CD4-positive, alpha-beta T cell (primary cell): ENCODE measurements at regions of chr7 and their contacts with region 1.

Region 1: GRCh38 chr7:87219545-87220025 is at the start of gene TMEM243:
- DNase-seq: peak; percentile 71 to 93 (median 82)
- ATAC-seq: peak; percentile 65
- H3K4me3 ChIP-seq: peak within 1 kb of the TSS; percentile 89
- H3K4me3 Mint-ChIP-seq: peak within 1 kb of the TSS; percentile 100
- H3K27ac ChIP-seq: peak within 1 kb of the TSS; percentile 83 to 97
- H3K27ac Mint-ChIP-seq: peak within 1 kb of the TSS; percentile 92
- H3K4me1 ChIP-seq: peaks cover 41% of the 10 kb centered on the region
- H3K4me1 Mint-ChIP-seq: peaks cover 47% of the 10 kb centered on the region
- H3K27me3 ChIP-seq: no peaks in the 10 kb centered on the region
- H3K27me3 Mint-ChIP-seq: no peaks in the 10 kb centered on the region
- CTCF ChIP-seq: peak; percentile 31
- total RNA-seq, gene TMEM243: 158 to 161 TPM

Region 2: GRCh38 chr7:86978808-86979506 is 240.6 kb before region 1 on chr7:
- CTCF ChIA-PET with region 1: no interaction called
- POLR2A ChIA-PET with region 1: interaction called, 4 read pairs
- intact Hi-C with region 1: loop called in 1 of 2 experiments (anchors 5 kb)
- DNase-seq: peak in 6 of 14 experiments; percentile 5 to 90 (median 58)
- ATAC-seq: peak; percentile 90
- H3K4me3 ChIP-seq: no peak overlapping the region
- H3K4me3 Mint-ChIP-seq: peak overlapping the region; percentile 5
- H3K27ac ChIP-seq: peak overlapping the region; percentile 36 to 47
- H3K27ac Mint-ChIP-seq: peak overlapping the region; percentile 86
- H3K4me1 ChIP-seq: peaks cover 21% of the 10 kb centered on the region
- H3K4me1 Mint-ChIP-seq: peaks cover 54% of the 10 kb centered on the region
- H3K27me3 ChIP-seq: no peaks in the 10 kb centered on the region
- H3K27me3 Mint-ChIP-seq: no peaks in the 10 kb centered on the region
- CTCF ChIP-seq: no peak

Region 3: DNA sequence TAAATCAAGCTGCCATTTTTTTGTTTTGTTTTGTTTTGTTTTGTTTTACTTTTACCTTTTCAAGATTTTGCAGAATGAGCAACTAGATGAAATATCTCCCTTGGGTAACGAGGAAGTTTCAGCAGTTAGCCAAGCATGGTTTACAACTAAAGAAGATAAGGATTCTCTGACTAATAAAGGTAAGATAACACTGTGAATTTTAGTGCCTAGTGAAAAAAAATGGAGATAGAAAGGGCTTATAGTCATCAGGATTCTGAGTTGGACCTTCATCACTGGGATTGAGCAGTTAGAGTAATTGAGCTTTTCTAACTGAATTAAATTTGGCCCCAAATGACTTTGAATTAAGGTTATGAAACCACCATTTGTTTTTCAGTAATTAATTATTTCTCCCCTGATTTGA is 46.1 kb before region 1 on chr7:
- CTCF ChIA-PET with region 1: interaction called, 8 read pairs
- POLR2A ChIA-PET with region 1: interaction called, 21 read pairs
- intact Hi-C with region 1: no loop called
- DNase-seq: no peak
- ATAC-seq: no peak
- H3K4me3 ChIP-seq: no peak overlapping the region
- H3K4me3 Mint-ChIP-seq: no peak overlapping the region
- H3K27ac ChIP-seq: no peak overlapping the region
- H3K27ac Mint-ChIP-seq: peak overlapping the region; percentile 54
- H3K4me1 ChIP-seq: no peaks in the 10 kb centered on the region
- H3K4me1 Mint-ChIP-seq: peaks cover 50% of the 10 kb centered on the region
- H3K27me3 ChIP-seq: no peaks in the 10 kb centered on the region
- H3K27me3 Mint-ChIP-seq: no peaks in the 10 kb centered on the region
- CTCF ChIP-seq: no peak

Region 4: GRCh38 chr7:87199700-87200450 is 19.7 kb before region 1 on chr7:
- CTCF ChIA-PET with region 1: interaction called, 5 read pairs
- POLR2A ChIA-PET with region 1: interaction called, 80 read pairs
- intact Hi-C with region 1: no loop called
- DNase-seq: no peak
- ATAC-seq: no peak
- H3K4me3 ChIP-seq: no peak overlapping the region
- H3K4me3 Mint-ChIP-seq: peak overlapping the region; percentile 9
- H3K27ac ChIP-seq: no peak overlapping the region
- H3K27ac Mint-ChIP-seq: peak overlapping the region; percentile 68
- H3K4me1 ChIP-seq: peaks cover 18% of the 10 kb centered on the region
- H3K4me1 Mint-ChIP-seq: peaks cover 74% of the 10 kb centered on the region
- H3K27me3 ChIP-seq: no peaks in the 10 kb centered on the region
- H3K27me3 Mint-ChIP-seq: no peaks in the 10 kb centered on the region
- CTCF ChIP-seq: no peak

Region 5: DNA sequence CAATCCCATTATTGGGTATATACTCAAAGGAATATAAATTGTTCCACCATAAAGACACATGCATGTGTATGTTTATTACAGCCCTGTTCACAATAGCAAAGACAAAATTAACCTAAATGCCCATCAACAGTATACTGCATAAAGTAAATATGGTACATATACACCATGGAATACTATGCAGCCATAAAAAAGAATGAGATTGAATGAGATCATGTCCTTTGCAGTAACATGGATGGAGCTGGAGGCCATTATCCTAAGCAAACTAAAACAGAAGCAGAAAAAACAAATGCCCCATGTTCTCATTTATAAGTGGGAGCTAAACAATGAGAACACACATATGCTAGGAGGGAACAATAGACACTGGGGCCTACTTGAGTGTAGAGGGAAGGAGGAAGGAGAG is 81.2 kb after region 1 on chr7:
- CTCF ChIA-PET with region 1: no interaction called
- POLR2A ChIA-PET with region 1: no interaction called
- intact Hi-C with region 1: no loop called
- DNase-seq: no peak
- ATAC-seq: no peak
- H3K4me3 ChIP-seq: no peak overlapping the region
- H3K4me3 Mint-ChIP-seq: no peak overlapping the region
- H3K27ac ChIP-seq: no peak overlapping the region
- H3K27ac Mint-ChIP-seq: no peak overlapping the region
- H3K4me1 ChIP-seq: no peaks in the 10 kb centered on the region
- H3K4me1 Mint-ChIP-seq: no peaks in the 10 kb centered on the region
- H3K27me3 ChIP-seq: no peaks in the 10 kb centered on the region
- H3K27me3 Mint-ChIP-seq: peaks cover 5% of the 10 kb centered on the region
- CTCF ChIP-seq: no peak

Region 6: GRCh38 chr7:87426160-87426559 is 206.6 kb after region 1 on chr7:
- CTCF ChIA-PET with region 1: no interaction called
- POLR2A ChIA-PET with region 1: no interaction called
- intact Hi-C with region 1: no loop called
- DNase-seq: no peak
- ATAC-seq: no peak
- H3K4me3 ChIP-seq: no peak overlapping the region
- H3K4me3 Mint-ChIP-seq: no peak overlapping the region
- H3K27ac ChIP-seq: no peak overlapping the region
- H3K27ac Mint-ChIP-seq: no peak overlapping the region
- H3K4me1 ChIP-seq: no peaks in the 10 kb centered on the region
- H3K4me1 Mint-ChIP-seq: no peaks in the 10 kb centered on the region
- H3K27me3 ChIP-seq: peaks cover 3 to 15% of the 10 kb centered on the region in 2 experiments
- H3K27me3 Mint-ChIP-seq: peaks cover 25% of the 10 kb centered on the region
- CTCF ChIP-seq: no peak

Region 7: GRCh38 chr7:87876040-87876868 is 656.7 kb after region 1 on chr7 and contains the starts of genes DBF4 and SLC25A40:
- CTCF ChIA-PET with region 1: no interaction called
- POLR2A ChIA-PET with region 1: interaction called, 5 read pairs
- intact Hi-C with region 1: loop called (anchors 5 to 10 kb)
- DNase-seq: peak; percentile 88 to 98 (median 95)
- ATAC-seq: peak; percentile 86
- H3K4me3 ChIP-seq: peak within 1 kb of the TSS; percentile 97
- H3K4me3 Mint-ChIP-seq: peak within 1 kb of the TSS; percentile 98
- H3K27ac ChIP-seq: peak within 1 kb of the TSS; percentile 84 to 94
- H3K27ac Mint-ChIP-seq: peak within 1 kb of the TSS; percentile 98
- H3K4me1 ChIP-seq: peaks cover 9% of the 10 kb centered on the region
- H3K4me1 Mint-ChIP-seq: peaks cover 63% of the 10 kb centered on the region
- H3K27me3 ChIP-seq: no peaks in the 10 kb centered on the region
- H3K27me3 Mint-ChIP-seq: no peaks in the 10 kb centered on the region
- CTCF ChIP-seq: no peak
- total RNA-seq, gene DBF4: 58.1 to 61.9 TPM
- total RNA-seq, gene SLC25A40: 9.4 to 11.1 TPM